AG04450 (cell line): ENCODE measurements at regions of chr1 and their contacts with region 1.

Region 1: GRCh38 chr1:67535474-67535873 is 105.3 kb upstream of the SERBP1 start:
- DNase-seq: peak; percentile 65
- H3K4me3 ChIP-seq: no peak overlapping the region
- H3K27ac ChIP-seq: no peak overlapping the region
- H3K27me3 ChIP-seq: no peaks in the 10 kb centered on the region
- CTCF ChIP-seq: peak; percentile 99

Region 2: DNA sequence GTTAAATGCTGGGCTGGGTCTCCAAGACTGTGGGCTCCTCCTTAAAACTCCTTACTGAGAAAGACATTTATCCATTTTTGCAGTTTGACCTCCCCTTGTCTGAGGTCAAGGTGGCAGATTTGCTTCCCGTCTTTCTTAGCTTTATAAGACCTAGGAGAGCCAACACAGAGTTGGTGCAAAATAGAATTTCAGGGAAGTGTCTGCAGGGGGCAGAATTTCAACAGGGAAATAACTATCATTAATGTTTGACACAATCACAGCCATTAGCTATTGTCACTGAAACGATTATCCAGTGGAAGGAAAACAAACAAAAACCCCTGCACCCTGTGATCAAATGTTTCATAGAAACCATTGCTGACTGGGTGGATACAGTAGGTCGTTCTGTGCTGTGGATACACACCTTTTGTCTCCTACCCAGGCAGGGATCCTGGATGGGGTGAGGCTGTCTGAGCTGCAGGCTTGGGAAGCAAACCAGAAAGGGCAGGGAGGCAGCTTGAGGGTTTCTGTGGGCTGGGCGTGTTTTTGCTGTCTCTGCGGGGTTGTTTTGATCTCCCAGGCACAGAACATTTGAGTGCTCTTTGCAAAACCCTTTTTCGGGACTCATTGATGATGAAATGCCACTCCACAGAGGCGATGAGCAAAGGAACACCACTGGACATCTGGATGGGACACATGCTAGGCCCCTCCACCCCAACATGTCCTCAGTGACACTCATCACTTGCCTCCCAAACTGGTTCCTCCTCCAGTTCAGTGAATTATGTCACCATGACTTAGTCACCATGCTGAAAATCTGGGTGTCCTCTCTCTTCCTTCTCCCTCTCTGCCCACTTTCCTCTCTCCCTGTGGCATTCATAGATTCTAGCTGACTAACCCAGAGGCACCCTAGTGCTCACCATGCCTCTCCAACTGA is 11.1 kb before region 1 on chr1:
- CTCF ChIA-PET with region 1: interaction called, 38 read pairs
- POLR2A ChIA-PET with region 1: no interaction called
- DNase-seq: no peak
- H3K4me3 ChIP-seq: no peak overlapping the region
- H3K27ac ChIP-seq: no peak overlapping the region
- H3K27me3 ChIP-seq: peaks cover 2% of the 10 kb centered on the region
- CTCF ChIP-seq: peak; percentile 20; the same call in 1 of the 2 replicates

Region 3: GRCh38 chr1:67561704-67562113 is 26.2 kb after region 1 on chr1:
- CTCF ChIA-PET with region 1: interaction called, 19 read pairs
- POLR2A ChIA-PET with region 1: no interaction called
- DNase-seq: peak; percentile 65
- H3K4me3 ChIP-seq: no peak overlapping the region
- H3K27ac ChIP-seq: no peak overlapping the region
- H3K27me3 ChIP-seq: no peaks in the 10 kb centered on the region
- CTCF ChIP-seq: peak; percentile 96

Region 4: DNA sequence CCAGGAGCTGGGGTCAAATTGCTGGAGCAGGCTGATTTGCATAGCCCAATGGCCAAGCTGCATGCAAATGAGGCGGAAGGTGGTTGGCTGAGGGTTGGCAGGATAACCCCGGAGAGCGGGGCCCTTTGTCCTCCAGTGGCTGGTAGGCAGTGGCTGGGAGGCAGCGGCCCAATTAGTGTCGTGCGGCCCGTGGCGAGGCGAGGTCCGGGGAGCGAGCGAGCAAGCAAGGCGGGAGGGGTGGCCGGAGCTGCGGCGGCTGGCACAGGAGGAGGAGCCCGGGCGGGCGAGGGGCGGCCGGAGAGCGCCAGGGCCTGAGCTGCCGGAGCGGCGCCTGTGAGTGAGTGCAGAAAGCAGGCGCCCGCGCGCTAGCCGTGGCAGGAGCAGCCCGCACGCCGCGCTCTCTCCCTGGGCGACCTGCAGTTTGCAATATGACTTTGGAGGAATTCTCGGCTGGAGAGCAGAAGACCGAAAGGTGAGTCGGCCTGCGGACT is 149.6 kb after region 1 on chr1 and contains the start of gene GADD45A:
- CTCF ChIA-PET with region 1: interaction called, 38 read pairs
- POLR2A ChIA-PET with region 1: interaction called, 13 read pairs
- DNase-seq: peak; percentile 99
- H3K4me3 ChIP-seq: peak within 1 kb of the TSS; percentile 89
- H3K27ac ChIP-seq: peak within 1 kb of the TSS; percentile 97
- H3K27me3 ChIP-seq: no peaks in the 10 kb centered on the region
- CTCF ChIP-seq: no peak
- polyA plus RNA-seq, gene GADD45A: 33.7 and 41.8 TPM in 2 replicates

Region 5: GRCh38 chr1:67741121-67741520 is 205.6 kb after region 1 on chr1:
- CTCF ChIA-PET with region 1: interaction called, 19 read pairs
- POLR2A ChIA-PET with region 1: no interaction called
- DNase-seq: no peak
- H3K4me3 ChIP-seq: no peak overlapping the region
- H3K27ac ChIP-seq: no peak overlapping the region
- H3K27me3 ChIP-seq: no peaks in the 10 kb centered on the region
- CTCF ChIP-seq: no peak

Region 6: DNA sequence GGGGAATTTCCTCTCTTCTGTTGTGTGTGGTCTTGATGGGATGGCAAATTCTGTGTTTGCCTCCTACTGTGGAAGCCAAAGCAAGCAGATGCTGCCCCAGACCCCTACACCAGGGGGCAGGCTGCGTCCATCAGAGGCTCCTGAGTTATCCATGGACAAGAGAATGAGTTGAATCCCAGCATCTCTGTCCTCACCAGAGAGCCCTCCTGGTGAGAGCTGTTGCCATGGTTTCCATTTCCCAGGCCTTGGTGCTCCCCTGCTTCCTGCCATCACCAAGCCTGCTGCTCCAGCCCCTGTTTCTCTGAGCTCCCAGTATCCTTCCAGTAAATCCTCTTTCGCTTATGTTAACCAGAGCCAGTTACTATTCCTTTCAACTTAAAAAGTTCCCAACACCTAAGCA is 318.2 kb after region 1 on chr1:
- CTCF ChIA-PET with region 1: interaction called, 12 read pairs
- POLR2A ChIA-PET with region 1: no interaction called
- DNase-seq: no peak
- H3K4me3 ChIP-seq: no peak overlapping the region
- H3K27ac ChIP-seq: no peak overlapping the region
- H3K27me3 ChIP-seq: no peaks in the 10 kb centered on the region
- CTCF ChIP-seq: peak; percentile 99